H1 (cell line): ENCODE measurements at regions of chr9 and their contacts with region 1.

Region 1: GRCh38 chr9:113807173-113808061 is 68.7 kb upstream of the ZNF618 start:
- DNase-seq: peak in 1 of 2 experiments; percentile 80
- H3K4me3 ChIP-seq: no peak overlapping the region
- H3K27ac ChIP-seq: no peak overlapping the region
- H3K4me1 ChIP-seq: 0 out of 7 replicates have a peak, but pooled peaks cover 0 to 3% (median 0%) of the 10 kb centered on the region in 4 experiments
- H3K27me3 ChIP-seq: no peaks in the 10 kb centered on the region
- CTCF ChIP-seq: peak; percentile 53 to 92 (median 77)
- EP300 ChIP-seq: no peak
- POLR2A ChIP-seq: no peak
- RAD21 ChIP-seq: peak; percentile 83 to 84

Region 2: DNA sequence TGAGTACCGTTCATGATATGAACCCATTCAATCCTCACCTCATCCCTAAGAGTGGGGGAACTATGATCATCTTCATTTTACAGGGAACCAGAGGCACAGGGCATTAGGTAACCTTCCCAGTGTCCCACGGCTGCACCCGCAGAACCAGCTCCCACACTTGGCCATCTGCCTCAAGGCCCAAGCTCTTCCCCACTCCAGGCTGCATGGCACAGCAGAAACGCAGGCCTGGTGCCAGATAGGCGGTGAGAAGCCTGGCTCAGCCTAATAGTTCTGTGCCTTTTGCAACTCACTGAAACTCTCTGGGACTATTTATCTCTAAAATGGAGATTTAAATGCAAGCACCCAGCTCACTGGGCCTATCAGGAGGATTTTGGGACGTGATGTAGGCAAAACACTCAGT is 22.1 kb before region 1 on chr9:
- CTCF ChIA-PET with region 1: interaction called, 13 read pairs
- POLR2A ChIA-PET with region 1: no interaction called
- DNase-seq: no peak
- H3K4me3 ChIP-seq: no peak overlapping the region
- H3K27ac ChIP-seq: no peak overlapping the region
- H3K4me1 ChIP-seq: peaks cover 0 to 6% (median 0%) of the 10 kb centered on the region in 4 experiments; a peak in 2 of 7 replicates
- H3K27me3 ChIP-seq: no peaks in the 10 kb centered on the region
- CTCF ChIP-seq: no peak
- EP300 ChIP-seq: no peak
- POLR2A ChIP-seq: no peak
- RAD21 ChIP-seq: no peak

Region 3: DNA sequence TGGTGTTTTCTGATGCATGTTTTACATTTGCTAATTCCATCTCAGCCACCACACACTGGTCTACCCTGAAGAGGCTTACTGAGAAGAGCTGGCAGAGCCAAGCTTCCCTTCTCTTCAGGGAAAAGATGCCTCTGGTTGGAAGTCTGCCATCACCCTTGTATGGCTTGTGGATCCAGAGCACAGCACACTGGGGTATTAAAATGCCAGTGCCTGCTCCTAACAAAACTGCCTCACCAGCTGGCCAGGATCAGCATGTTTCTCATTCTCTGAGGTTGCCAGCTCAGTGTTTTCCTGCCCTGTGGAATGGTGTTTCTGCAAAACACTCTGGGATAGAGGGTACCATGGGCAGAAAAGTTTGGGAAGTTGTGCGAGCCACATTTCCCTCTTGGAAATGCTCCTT is 37.0 kb after region 1 on chr9:
- CTCF ChIA-PET with region 1: interaction called, 11 read pairs
- POLR2A ChIA-PET with region 1: no interaction called
- DNase-seq: no peak
- H3K4me3 ChIP-seq: no peak overlapping the region
- H3K27ac ChIP-seq: no peak overlapping the region
- H3K4me1 ChIP-seq: no peaks in the 10 kb centered on the region
- H3K27me3 ChIP-seq: no peaks in the 10 kb centered on the region
- CTCF ChIP-seq: no peak
- EP300 ChIP-seq: no peak
- POLR2A ChIP-seq: no peak
- RAD21 ChIP-seq: no peak

Region 4: GRCh38 chr9:113895526-113895925 is 88.1 kb after region 1 on chr9:
- CTCF ChIA-PET with region 1: no interaction called
- POLR2A ChIA-PET with region 1: no interaction called
- DNase-seq: no peak
- H3K4me3 ChIP-seq: no peak overlapping the region
- H3K27ac ChIP-seq: no peak overlapping the region
- H3K4me1 ChIP-seq: no peaks in the 10 kb centered on the region
- H3K27me3 ChIP-seq: no peaks in the 10 kb centered on the region
- CTCF ChIP-seq: no peak
- EP300 ChIP-seq: no peak
- POLR2A ChIP-seq: no peak
- RAD21 ChIP-seq: no peak

Region 5: DNA sequence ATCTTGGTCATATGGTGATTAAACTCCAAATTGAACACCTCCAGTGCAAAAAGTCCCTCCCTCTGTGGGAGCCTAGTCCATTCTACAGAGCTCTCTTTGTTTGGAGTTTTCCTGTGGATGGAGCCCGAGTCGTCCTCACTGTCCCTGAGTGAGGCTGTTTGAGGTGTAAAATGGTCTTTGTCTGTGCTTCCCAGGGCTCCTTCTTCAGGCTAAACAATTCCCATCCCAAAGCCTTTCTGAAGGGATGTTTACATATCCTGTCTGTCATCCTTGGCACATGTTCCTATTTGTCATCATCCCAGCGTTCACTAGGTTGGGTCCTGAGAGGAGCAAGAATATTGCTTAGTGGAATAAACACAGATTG is 416.8 kb after region 1 on chr9:
- CTCF ChIA-PET with region 1: no interaction called
- POLR2A ChIA-PET with region 1: no interaction called
- DNase-seq: no peak
- H3K4me3 ChIP-seq: no peak overlapping the region
- H3K27ac ChIP-seq: no peak overlapping the region
- H3K4me1 ChIP-seq: peaks cover 0 to 10% (median 1%) of the 10 kb centered on the region in 4 experiments; a peak in 3 of 7 replicates
- H3K27me3 ChIP-seq: no peaks in the 10 kb centered on the region
- CTCF ChIP-seq: no peak
- EP300 ChIP-seq: no peak
- POLR2A ChIP-seq: no peak
- RAD21 ChIP-seq: no peak